Breast epithelium (tissue), 4 donors: ENCODE measurements at regions of chr3 and their contacts with region 1.

Region 1: DNA sequence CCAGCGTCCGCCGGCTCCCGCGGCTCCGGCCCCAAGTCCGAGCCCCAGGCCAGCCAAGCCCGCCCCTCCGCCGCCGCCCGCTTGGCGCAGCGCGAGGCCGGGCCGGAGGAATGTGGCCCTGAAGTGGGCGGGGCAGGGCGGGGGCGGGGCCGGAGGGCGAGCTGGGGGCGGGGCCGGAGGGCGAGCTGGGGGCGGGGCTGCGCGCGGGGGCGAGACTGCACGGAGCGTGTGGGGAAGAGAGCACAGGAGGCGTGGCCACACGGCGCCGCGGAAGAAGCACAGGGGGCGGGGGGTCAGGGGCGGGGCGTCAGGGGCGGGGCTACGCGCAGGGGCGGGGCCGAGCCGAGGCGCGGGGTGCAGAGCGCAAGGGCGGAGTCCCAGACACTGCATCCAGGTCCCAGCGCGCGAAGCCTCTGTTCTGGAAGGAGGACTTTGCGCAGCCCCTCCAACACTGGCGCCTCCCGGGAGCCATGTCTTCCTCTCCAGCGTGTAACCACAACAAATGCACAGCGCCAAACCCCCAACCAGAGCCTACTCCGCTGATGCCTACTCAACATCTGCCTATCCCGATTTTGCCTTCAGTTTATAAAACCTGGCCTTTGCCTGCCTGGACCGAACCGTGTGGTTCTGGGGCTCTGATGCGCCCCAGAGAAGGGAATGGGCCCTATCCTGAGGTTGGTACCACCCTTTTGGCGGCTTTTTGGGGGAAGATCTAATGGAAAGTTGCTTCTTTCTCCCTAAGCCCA is 105.5 kb downstream of the IQSEC1 start:
- DNase-seq: peak; percentile 87 to 88
- H3K4me3 ChIP-seq: peak overlapping the region; percentile 71 to 88 (median 73)
- H3K27ac ChIP-seq: peak overlapping the region; percentile 66 to 76
- H3K4me1 ChIP-seq: peaks cover 0 to 6% of the 10 kb centered on the region in 2 donors
- H3K27me3 ChIP-seq: no peaks in the 10 kb centered on the region
- CTCF ChIP-seq: no peak
- POLR2A ChIP-seq: no peak

Region 2: GRCh38 chr3:11346416-11346815 is 1621.4 kb before region 1 on chr3:
- intact Hi-C with region 1: no loop called
- DNase-seq: no peak
- H3K4me3 ChIP-seq: no peak overlapping the region
- H3K27ac ChIP-seq: no peak overlapping the region
- H3K4me1 ChIP-seq: no peaks in the 10 kb centered on the region
- H3K27me3 ChIP-seq: no peaks in the 10 kb centered on the region
- CTCF ChIP-seq: no peak
- POLR2A ChIP-seq: no peak

Region 3: DNA sequence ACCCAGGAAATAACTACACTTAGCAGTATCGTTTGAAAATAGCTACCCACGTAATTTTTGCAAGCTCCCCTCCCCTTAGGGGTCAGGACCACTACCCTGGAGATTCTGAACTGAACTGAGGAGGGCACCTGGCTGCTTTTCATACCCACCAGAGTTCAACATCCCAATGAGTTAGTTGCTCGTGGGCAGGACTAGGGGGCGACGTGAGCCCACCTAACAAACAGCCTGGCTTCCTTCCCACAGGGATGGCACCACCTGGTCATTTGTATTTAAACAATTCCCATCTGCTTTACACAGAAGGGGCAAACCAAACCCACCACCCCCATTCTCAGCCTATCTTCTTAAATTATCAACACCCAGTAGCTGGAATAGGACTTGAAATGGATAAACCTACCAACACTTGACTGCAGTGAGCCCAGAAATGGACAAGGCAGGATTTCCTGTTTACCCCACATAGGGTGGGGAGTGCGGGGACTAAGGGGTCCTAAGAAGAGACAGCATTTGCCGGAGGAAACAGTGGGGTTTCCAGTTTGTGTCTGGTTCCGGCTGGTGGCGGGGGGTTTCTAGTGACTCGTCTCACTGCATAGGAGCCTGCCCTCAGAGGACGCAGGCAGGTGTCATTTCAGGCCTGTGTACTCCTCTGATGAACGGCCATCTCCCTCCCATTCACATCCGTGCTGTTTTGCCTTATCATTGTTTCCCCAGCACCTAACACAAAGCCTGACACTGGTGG is 1312.4 kb before region 1 on chr3:
- intact Hi-C with region 1: loop called (anchors 5 kb)
- DNase-seq: no peak
- H3K4me3 ChIP-seq: no peak overlapping the region
- H3K27ac ChIP-seq: no peak overlapping the region
- H3K4me1 ChIP-seq: no peaks in the 10 kb centered on the region
- H3K27me3 ChIP-seq: no peaks in the 10 kb centered on the region
- CTCF ChIP-seq: no peak
- POLR2A ChIP-seq: no peak

Region 4: DNA sequence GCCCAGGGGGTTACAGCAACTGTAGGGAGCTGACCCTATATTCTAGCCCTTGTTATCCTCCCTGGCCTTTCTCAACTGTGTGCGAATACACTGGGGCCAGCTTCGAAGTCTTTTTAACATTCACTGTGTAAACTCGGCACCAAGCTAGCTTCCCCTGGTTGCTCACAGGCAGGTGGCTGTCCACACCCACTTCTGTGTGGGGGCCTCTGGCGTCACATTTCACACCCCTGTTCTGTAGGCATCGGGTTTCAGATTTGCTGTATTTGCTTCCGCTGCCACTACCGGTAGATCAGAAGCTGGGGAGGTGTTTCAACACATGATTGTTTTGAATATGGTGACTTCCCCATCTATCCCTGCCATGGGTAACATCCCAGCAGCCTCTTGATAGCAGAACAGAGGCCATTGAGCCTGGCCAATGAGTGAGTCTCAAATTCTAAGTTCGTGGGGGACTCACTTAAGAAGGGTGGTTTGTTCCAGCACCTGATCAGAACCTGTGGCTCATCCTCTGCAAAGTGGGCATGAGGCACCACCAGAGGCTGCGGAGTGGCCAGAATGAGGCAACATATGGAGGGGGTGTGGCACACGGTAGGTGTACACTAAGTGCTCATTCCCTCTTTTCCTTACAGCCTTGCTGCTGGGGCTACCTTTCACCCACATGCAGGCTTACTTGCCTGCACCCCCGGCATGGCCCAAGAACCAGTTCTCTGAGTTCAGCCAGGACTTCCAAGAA is 43.9 kb after region 1 on chr3:
- intact Hi-C with region 1: no loop called
- DNase-seq: no peak
- H3K4me3 ChIP-seq: no peak overlapping the region
- H3K27ac ChIP-seq: peak overlapping the region in 1 of 2 donors; percentile 77
- H3K4me1 ChIP-seq: no peaks in the 10 kb centered on the region
- H3K27me3 ChIP-seq: no peaks in the 10 kb centered on the region
- CTCF ChIP-seq: no peak
- POLR2A ChIP-seq: no peak